ENCODE measurements at regions of chr19 and their contacts with region 1.

Region 1: GRCh38 chr19:17346109-17346671 is 8.8 kb downstream of the GTPBP3 start:
- DNase-seq: peak; percentile 82
- H3K4me3 ChIP-seq: no peak overlapping the region
- H3K27ac ChIP-seq: peak overlapping the region in 2 of 4 donors; percentile 35 to 40
- H3K4me1 ChIP-seq: peaks cover 0 to 24% (median 3%) of the 10 kb centered on the region in 4 donors
- H3K27me3 ChIP-seq: peaks cover 25% of the 10 kb centered on the region
- CTCF ChIP-seq: peak; percentile 92 to 95 (median 94)
- EP300 ChIP-seq: no peak
- POLR2A ChIP-seq: no peak

Region 2: GRCh38 chr19:17469481-17470067 is 123.4 kb after region 1 on chr19:
- in situ Hi-C with region 1: loop called in 1 of 4 experiments (anchors 10 kb)
- intact Hi-C with region 1: loop called (anchors 5 kb)
- DNase-seq: peak; percentile 97
- H3K4me3 ChIP-seq: peak overlapping the region; percentile 22 to 88 (median 64)
- H3K27ac ChIP-seq: peak overlapping the region; percentile 82 to 88 (median 87)
- H3K4me1 ChIP-seq: peaks cover 13 to 40% (median 22%) of the 10 kb centered on the region in 4 donors
- H3K27me3 ChIP-seq: no peaks in the 10 kb centered on the region
- CTCF ChIP-seq: no peak
- EP300 ChIP-seq: no peak
- POLR2A ChIP-seq: no peak

Measured in transverse colon (tissue), 4 donors.